K562 (cell line): ENCODE measurements at regions of chr5 and their contacts with region 1.

Region 1: GRCh38 chr5:73591102-73591695 is 25.7 kb downstream of the UTP15 start:
- DNase-seq: peak; percentile 59 to 81 (median 62)
- ATAC-seq: peak; percentile 89
- H3K4me3 ChIP-seq: no peak overlapping the region
- H3K27ac ChIP-seq: no peak overlapping the region
- H3K4me1 ChIP-seq: no peaks in the 10 kb centered on the region
- H3K27me3 ChIP-seq: no peaks in the 10 kb centered on the region
- CTCF ChIP-seq: peak; percentile 65 to 87 (median 70)
- EP300 ChIP-seq: no peak
- POLR2A ChIP-seq: no peak
- RAD21 ChIP-seq: peak; percentile 90 to 94

Region 2: GRCh38 chr5:73550016-73550415 is 41.2 kb before region 1 on chr5:
- CTCF ChIA-PET with region 1: no interaction called
- POLR2A ChIA-PET with region 1: no interaction called
- in situ Hi-C with region 1: no loop called
- intact Hi-C with region 1: no loop called
- DNase-seq: no peak
- ATAC-seq: no peak
- H3K4me3 ChIP-seq: no peak overlapping the region
- H3K27ac ChIP-seq: no peak overlapping the region
- H3K4me1 ChIP-seq: peaks cover 0 to 5% of the 10 kb centered on the region in 2 experiments; a peak in 2 of 5 replicates
- H3K27me3 ChIP-seq: no peaks in the 10 kb centered on the region
- CTCF ChIP-seq: no peak
- EP300 ChIP-seq: no peak
- POLR2A ChIP-seq: no peak
- RAD21 ChIP-seq: no peak

Region 3: GRCh38 chr5:73693481-73694061 is 102.4 kb after region 1 on chr5:
- CTCF ChIA-PET with region 1: interaction called, 3 read pairs
- POLR2A ChIA-PET with region 1: no interaction called
- in situ Hi-C with region 1: no loop called
- intact Hi-C with region 1: loop called (anchors 5 kb)
- DNase-seq: peak in 1 of 4 experiments; percentile 12
- ATAC-seq: no peak
- H3K4me3 ChIP-seq: no peak overlapping the region
- H3K27ac ChIP-seq: no peak overlapping the region
- H3K4me1 ChIP-seq: no peaks in the 10 kb centered on the region
- H3K27me3 ChIP-seq: peaks cover 0 to 2% of the 10 kb centered on the region in 2 experiments; a peak in 2 of 5 replicates
- CTCF ChIP-seq: peak; percentile 26 to 59 (median 52); a peak in 4 of 6 replicates
- EP300 ChIP-seq: no peak
- POLR2A ChIP-seq: no peak
- RAD21 ChIP-seq: peak; percentile 37 to 39

Region 4: GRCh38 chr5:73792687-73793320 is 201.6 kb after region 1 on chr5:
- CTCF ChIA-PET with region 1: interaction called, 50 read pairs
- POLR2A ChIA-PET with region 1: interaction called, 7 read pairs
- in situ Hi-C with region 1: loop called (anchors 5 kb)
- intact Hi-C with region 1: loop called (anchors 1 kb)
- DNase-seq: peak; percentile 56 to 72 (median 66)
- ATAC-seq: peak; percentile 88
- H3K4me3 ChIP-seq: no peak overlapping the region
- H3K27ac ChIP-seq: no peak overlapping the region
- H3K4me1 ChIP-seq: no peaks in the 10 kb centered on the region
- H3K27me3 ChIP-seq: peaks cover 2 to 9% of the 10 kb centered on the region in 2 experiments; a peak in 2 of 5 replicates
- CTCF ChIP-seq: peak; percentile 89 to 94 (median 90)
- EP300 ChIP-seq: no peak
- POLR2A ChIP-seq: no peak
- RAD21 ChIP-seq: peak; percentile 89 to 95